Head of caudate nucleus (tissue), 42 donors: ENCODE measurements at regions of chr3 and their contacts with region 1.

Region 1: GRCh38 chr3:9843715-9844438 is at the start of gene RPUSD3:
- DNase-seq: peak; percentile 98 to 100 (median 99)

Region 2: GRCh38 chr3:9792405-9793160 is 51.3 kb before region 1 on chr3 and contains the starts of genes ARPC4 and TADA3:
- intact Hi-C with region 1: loop called (anchors 5 kb)
- DNase-seq: peak; percentile 77 to 97 (median 92)

Region 3: DNA sequence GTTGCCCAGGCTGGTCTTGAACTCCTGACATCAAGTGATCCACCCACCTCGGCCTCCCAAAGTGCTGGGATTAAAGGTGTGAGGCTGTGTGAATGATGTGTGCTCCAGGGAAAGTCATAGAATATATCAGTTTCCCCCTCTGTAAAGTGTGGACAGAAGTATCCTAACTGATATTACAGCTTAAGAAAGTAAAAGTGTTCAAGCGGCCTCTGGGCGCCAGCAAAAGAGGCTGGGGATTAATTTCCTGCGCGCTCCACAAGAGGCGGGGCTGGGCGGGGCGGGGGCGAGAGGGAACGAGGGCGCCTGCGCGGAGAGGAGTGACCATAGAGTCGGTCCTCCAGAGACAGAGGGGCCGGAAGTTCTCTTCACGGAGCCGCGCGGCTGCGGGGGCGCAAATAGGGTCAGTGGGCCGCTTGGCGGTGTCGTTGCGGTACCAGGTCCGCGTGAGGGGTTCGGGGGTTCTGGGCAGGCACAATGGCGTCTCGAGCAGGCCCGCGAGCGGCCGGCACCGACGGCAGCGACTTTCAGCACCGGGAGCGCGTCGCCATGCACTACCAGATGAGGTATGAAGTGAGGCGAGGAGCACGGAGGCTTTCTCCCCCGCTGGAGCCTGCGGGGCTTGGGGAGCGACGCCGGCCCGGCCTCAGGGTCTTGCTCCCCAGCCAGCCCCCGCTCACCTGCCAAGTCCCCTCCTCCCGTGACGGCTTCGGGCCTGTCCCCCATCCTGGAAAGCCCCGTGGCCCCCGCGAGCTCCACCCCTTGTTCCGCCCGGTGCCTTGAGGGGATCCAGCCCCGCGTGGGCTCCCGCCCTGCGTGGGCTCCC is 46.6 kb after region 1 on chr3 and contains the start of gene JAGN1:
- intact Hi-C with region 1: loop called (anchors 10 kb)
- DNase-seq: peak; percentile 76 to 96 (median 90)

Region 4: GRCh38 chr3:9932843-9933560 is 89.1 kb after region 1 on chr3:
- intact Hi-C with region 1: loop called (anchors 5 kb)
- DNase-seq: peak; percentile 57 to 93 (median 80)

Region 5: DNA sequence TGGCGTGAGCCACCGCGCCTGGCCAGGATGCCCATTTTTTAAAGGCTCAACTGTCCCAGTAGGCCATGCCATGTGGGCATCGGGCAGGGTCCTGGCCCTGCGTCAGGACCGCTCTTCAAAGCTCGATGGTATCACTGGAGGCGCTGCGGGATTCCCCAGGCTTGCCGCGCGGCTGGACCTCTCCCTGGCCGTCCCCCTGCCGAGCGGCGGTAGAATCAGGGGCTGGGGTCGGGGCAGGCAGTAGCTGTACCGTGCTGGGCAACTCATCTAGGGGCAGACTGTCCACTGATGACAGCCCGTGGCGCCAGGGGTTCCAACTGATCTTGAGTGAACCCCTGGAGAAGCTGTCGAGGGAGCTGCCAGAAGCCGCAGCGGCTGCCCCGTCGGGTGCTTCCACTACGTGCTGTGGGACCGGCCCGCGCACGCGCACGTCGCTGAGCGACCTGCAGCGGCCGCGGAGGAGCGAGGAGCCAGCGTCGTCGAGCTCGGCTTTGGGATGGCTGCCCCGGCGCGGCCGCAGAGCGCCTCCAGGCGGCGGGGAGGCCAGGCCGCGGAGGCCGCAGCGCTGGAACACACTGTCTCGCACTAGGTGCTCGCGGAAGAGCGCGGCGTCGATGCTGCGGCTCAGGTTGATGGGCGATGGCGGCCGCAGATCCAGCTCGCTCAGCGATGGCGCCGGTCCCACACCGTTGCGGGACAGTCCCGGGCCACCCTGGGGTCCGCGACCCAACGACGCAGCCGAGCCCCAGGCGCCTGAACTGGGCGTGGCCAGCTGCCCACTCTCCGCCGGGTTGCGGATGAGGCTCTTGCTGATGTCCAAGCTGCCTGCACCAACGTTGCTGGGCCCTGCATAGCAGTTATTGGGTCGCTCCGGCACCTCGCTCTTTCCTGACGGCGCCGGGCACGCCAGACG is 102.5 kb after region 1 on chr3:
- intact Hi-C with region 1: loop called (anchors 5 kb)
- DNase-seq: peak; percentile 55 to 92 (median 83)

Region 6: GRCh38 chr3:10085736-10086135 is 241.9 kb after region 1 on chr3:
- intact Hi-C with region 1: no loop called
- DNase-seq: no peak